ENCODE measurements at regions of chr16 and their contacts with region 1.

Region 1: GRCh38 chr16:29729116-29729521 is 16.7 kb downstream of the C16orf54 start:
- DNase-seq: peak; percentile 67

Region 2: DNA sequence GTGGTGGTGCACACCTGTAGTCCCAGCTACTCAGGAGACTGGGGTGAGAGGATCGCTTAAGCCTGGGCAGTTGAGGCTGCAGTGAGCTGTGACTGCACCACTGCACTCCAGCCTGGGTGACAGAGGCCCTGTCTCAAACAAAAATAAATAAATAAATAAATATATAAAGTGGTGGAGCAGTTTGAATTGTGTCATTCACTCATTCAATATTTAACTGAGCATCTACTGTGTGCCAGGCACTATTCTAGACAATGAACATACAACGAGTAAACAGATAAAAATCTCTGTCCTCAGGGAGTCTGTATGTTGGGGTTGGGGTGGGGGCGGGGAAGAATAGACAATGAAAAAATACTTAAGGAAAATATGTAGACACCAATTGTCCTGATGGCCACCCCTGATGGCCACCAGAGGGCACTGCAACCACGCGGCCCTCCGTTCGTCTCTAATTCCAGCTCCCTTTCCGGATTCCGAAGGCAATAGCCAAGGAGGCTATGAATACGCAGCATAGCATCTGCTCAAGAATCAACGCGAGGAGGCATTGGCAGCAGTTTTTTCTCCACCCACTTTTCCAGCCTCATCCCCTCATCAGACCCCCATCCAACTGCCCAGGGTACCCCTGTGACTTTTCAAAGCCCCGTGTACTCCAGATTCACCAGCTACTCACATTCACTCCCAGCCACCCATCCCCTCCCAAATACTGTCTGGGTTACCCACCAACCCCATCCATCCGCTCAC is 28.7 kb before region 1 on chr16:
- CTCF ChIA-PET with region 1: interaction called, 13 read pairs
- POLR2A ChIA-PET with region 1: interaction called, 3 read pairs
- DNase-seq: peak; percentile 87

Measured in HEK293T (cell line).